Cardiac septum (tissue), 1 donor: ENCODE measurements at regions of chr14 and their contacts with region 1.

Region 1: GRCh38 chr14:22653012-22653621 is 9.0 kb upstream of the OR6J1 start:
- DNase-seq: no peak

Region 2: GRCh38 chr14:22386924-22387775 is 266.0 kb before region 1 on chr14:
- intact Hi-C with region 1: loop called (anchors 5 kb)
- DNase-seq: no peak

Region 3: GRCh38 chr14:22478670-22479069 is 174.4 kb before region 1 on chr14:
- intact Hi-C with region 1: no loop called
- DNase-seq: no peak

Region 4: GRCh38 chr14:22556990-22557623 is 96.0 kb before region 1 on chr14:
- intact Hi-C with region 1: loop called (anchors 5 kb)
- DNase-seq: peak; percentile 93

Region 5: DNA sequence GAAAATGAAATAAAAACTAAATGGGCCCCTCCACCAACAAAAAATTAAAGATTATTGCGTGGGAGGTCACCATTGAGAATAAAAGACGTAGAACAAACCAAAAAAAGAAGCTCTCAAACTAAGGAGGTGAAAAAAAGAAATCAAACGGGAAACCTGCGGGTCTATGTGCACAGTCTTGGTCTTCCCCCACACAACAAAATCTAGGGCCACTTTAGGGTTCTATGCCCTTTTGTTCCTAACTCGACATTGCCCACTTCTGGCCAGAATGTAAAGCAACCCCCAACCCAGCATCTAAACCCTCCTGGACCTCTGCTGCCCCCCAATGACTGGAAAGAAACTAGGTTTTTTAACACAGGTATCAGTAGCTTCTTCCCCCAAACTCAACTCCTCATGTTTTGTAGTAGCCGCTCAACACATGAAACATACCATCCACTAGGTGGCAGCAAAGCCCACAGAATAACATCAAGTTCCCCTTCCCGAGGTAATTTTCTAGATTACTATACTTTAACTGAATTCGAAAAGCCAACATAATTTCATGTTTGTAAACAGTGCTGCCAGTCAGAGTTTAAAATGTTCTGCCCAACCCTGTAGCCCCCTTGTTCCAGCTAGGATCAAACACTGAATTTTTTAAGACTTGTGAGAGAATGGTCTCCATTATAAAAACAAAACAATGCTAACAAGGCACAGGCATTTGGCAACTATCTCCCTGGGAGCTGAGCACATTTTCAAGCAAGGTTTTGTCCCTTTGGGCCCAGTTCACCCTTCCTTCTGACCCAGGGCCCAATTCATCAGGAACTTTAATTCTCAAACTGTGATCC is 82.8 kb before region 1 on chr14:
- intact Hi-C with region 1: loop called (anchors 1 kb)
- DNase-seq: no peak

Region 6: GRCh38 chr14:22822571-22823098 is 169.5 kb after region 1 on chr14:
- intact Hi-C with region 1: loop called (anchors 5 kb)
- DNase-seq: no peak